CD4-positive, alpha-beta T cell (primary cell): ENCODE measurements at regions of chr2 and their contacts with region 1.

Region 1: GRCh38 chr2:160970052-160970965 is 189.9 kb upstream of the TANK start:
- DNase-seq: peak in 4 of 14 experiments; percentile 22 to 48 (median 38)
- ATAC-seq: peak; percentile 67
- H3K4me3 ChIP-seq: no peak overlapping the region
- H3K4me3 Mint-ChIP-seq: no peak overlapping the region
- H3K27ac ChIP-seq: no peak overlapping the region
- H3K27ac Mint-ChIP-seq: no peak overlapping the region
- H3K4me1 ChIP-seq: no peaks in the 10 kb centered on the region
- H3K4me1 Mint-ChIP-seq: no peaks in the 10 kb centered on the region
- H3K27me3 ChIP-seq: no peaks in the 10 kb centered on the region
- H3K27me3 Mint-ChIP-seq: no peaks in the 10 kb centered on the region
- CTCF ChIP-seq: peak; percentile 57

Region 2: DNA sequence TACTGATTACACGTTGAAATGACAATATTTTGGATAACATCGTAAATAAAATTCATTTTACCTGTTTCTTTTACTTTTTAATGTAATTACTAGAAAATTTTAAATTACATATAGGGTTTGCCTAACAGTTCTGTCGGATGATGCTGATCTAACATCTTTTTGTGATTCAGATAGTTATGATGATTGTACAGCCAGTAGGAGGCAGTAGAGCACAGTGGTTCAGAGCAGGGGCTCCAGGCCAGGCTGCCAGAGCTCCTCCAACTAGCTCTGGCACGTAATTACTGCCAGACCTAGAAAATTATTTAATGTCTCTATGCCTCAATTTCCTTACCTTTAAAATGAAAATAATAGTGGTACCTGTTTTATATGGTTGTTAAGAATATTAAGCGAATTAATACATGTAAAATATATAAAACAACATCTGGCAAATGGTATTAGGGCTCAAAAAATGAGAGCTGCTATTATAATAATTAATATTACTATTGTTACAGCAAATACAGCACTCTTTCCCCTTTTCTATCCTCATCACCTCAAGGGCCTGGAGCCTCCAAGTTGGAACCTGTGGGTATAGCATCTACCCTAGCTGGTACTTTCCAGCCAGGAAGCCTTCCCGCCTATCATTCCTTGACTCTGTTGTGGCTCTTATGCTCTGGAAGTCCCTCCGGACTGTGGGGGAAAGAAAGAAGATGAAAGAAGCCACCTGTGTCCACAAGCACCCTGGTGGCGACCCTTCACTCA is 860.2 kb before region 1 on chr2:
- CTCF ChIA-PET with region 1: no interaction called
- POLR2A ChIA-PET with region 1: no interaction called
- intact Hi-C with region 1: loop called in 1 of 2 experiments (anchors 1 kb)
- DNase-seq: peak in 13 of 14 experiments; percentile 11 to 78 (median 31)
- ATAC-seq: peak; percentile 84
- H3K4me3 ChIP-seq: no peak overlapping the region
- H3K4me3 Mint-ChIP-seq: no peak overlapping the region
- H3K27ac ChIP-seq: no peak overlapping the region
- H3K27ac Mint-ChIP-seq: no peak overlapping the region
- H3K4me1 ChIP-seq: no peaks in the 10 kb centered on the region
- H3K4me1 Mint-ChIP-seq: no peaks in the 10 kb centered on the region
- H3K27me3 ChIP-seq: peaks cover 0 to 4% of the 10 kb centered on the region in 2 experiments
- H3K27me3 Mint-ChIP-seq: peaks cover 6% of the 10 kb centered on the region
- CTCF ChIP-seq: peak; percentile 81

Region 3: GRCh38 chr2:160324161-160324800 is 646.0 kb before region 1 on chr2:
- CTCF ChIA-PET with region 1: interaction called, 3 read pairs
- POLR2A ChIA-PET with region 1: interaction called, 4 read pairs
- intact Hi-C with region 1: loop called (anchors 2 to 5 kb)
- DNase-seq: peak; percentile 12 to 66 (median 29)
- ATAC-seq: no peak
- H3K4me3 ChIP-seq: no peak overlapping the region
- H3K4me3 Mint-ChIP-seq: peak overlapping the region; percentile 12
- H3K27ac ChIP-seq: no peak overlapping the region
- H3K27ac Mint-ChIP-seq: peak overlapping the region; percentile 14
- H3K4me1 ChIP-seq: peaks cover 37% of the 10 kb centered on the region
- H3K4me1 Mint-ChIP-seq: peaks cover 93% of the 10 kb centered on the region
- H3K27me3 ChIP-seq: no peaks in the 10 kb centered on the region
- H3K27me3 Mint-ChIP-seq: no peaks in the 10 kb centered on the region
- CTCF ChIP-seq: peak; percentile 76

Region 4: GRCh38 chr2:160353166-160353565 is 617.1 kb before region 1 on chr2:
- CTCF ChIA-PET with region 1: interaction called, 4 read pairs
- POLR2A ChIA-PET with region 1: no interaction called
- intact Hi-C with region 1: loop called in 1 of 2 experiments (anchors 1 kb)
- DNase-seq: peak in 10 of 14 experiments; percentile 11 to 67 (median 18)
- ATAC-seq: peak; percentile 90
- H3K4me3 ChIP-seq: no peak overlapping the region
- H3K4me3 Mint-ChIP-seq: peak overlapping the region; percentile 22
- H3K27ac ChIP-seq: no peak overlapping the region
- H3K27ac Mint-ChIP-seq: peak overlapping the region; percentile 46
- H3K4me1 ChIP-seq: no peaks in the 10 kb centered on the region
- H3K4me1 Mint-ChIP-seq: peaks cover 87% of the 10 kb centered on the region
- H3K27me3 ChIP-seq: no peaks in the 10 kb centered on the region
- H3K27me3 Mint-ChIP-seq: no peaks in the 10 kb centered on the region
- CTCF ChIP-seq: peak; percentile 60